ENCODE measurements at regions of chr18 and their contacts with region 1.

Region 1: GRCh38 chr18:63367053-63367953 is at the start of gene KDSR:
- DNase-seq: peak; percentile 85
- H3K4me3 Mint-ChIP-seq: peak within 1 kb of the TSS; percentile 84
- H3K27ac Mint-ChIP-seq: peak within 1 kb of the TSS; percentile 79
- H3K4me1 Mint-ChIP-seq: peaks cover 26% of the 10 kb centered on the region
- H3K27me3 Mint-ChIP-seq: no peaks in the 10 kb centered on the region
- total RNA-seq, gene KDSR: 75.2 to 81.5 TPM

Region 2: GRCh38 chr18:62522504-62523254 is 844.6 kb before region 1 on chr18 and contains the start of gene ZCCHC2:
- CTCF ChIA-PET with region 1: no interaction called
- intact Hi-C with region 1: loop called (anchors 5 kb)
- DNase-seq: peak; percentile 98
- H3K4me3 Mint-ChIP-seq: peak within 1 kb of the TSS; percentile 92
- H3K27ac Mint-ChIP-seq: peak within 1 kb of the TSS; percentile 98
- H3K4me1 Mint-ChIP-seq: peaks cover 14% of the 10 kb centered on the region
- H3K27me3 Mint-ChIP-seq: no peaks in the 10 kb centered on the region
- total RNA-seq, gene ZCCHC2: 22.1 to 23.3 TPM

Region 3: GRCh38 chr18:63237881-63238667 is 129.2 kb before region 1 on chr18:
- CTCF ChIA-PET with region 1: no interaction called
- intact Hi-C with region 1: loop called (anchors 5 kb)
- DNase-seq: no peak
- H3K4me3 Mint-ChIP-seq: no peak overlapping the region
- H3K27ac Mint-ChIP-seq: no peak overlapping the region
- H3K4me1 Mint-ChIP-seq: peaks cover 62% of the 10 kb centered on the region
- H3K27me3 Mint-ChIP-seq: no peaks in the 10 kb centered on the region

Region 4: DNA sequence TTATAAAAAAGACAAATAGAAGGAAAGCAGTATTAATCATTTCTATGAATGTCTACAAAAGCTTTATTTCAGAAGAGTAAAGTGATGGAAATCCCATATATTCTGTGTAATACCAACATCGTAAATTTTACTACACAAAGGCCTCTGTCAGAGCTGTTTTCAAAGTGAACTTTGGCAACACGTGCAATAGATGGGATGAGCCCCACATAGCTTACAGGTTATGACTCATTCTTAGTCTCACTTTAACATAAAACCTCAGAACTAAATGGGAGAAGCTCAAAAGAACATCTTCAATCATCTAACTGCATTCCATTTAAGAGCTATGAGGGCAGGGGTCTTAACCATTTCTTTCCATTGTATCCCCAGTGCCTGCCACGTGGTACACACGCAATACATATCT is 43.5 kb after region 1 on chr18:
- CTCF ChIA-PET with region 1: interaction called, 6 read pairs
- intact Hi-C with region 1: loop called (anchors 1 kb)
- DNase-seq: no peak
- H3K4me3 Mint-ChIP-seq: no peak overlapping the region
- H3K27ac Mint-ChIP-seq: peak overlapping the region; percentile 61
- H3K4me1 Mint-ChIP-seq: peaks cover 45% of the 10 kb centered on the region
- H3K27me3 Mint-ChIP-seq: no peaks in the 10 kb centered on the region

Region 5: DNA sequence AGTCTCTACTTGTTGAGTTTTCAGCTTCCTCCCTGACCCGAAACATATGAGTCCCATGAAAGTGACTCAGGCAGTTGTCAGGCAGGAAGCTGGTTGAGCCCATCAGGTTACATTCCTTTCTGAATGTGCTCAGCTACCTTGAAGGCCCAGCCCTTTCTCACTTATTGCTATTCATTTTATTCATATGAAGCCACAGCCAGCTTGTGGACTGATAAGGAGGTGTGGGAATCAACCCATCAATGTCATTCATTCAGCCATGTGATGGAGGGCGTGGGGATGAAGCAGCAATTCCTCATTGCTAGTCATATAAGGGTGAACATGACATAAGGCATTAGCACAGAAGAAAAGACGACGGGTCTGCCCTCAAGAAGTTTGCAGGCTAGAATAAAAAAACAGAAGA is 60.3 kb after region 1 on chr18:
- CTCF ChIA-PET with region 1: no interaction called
- intact Hi-C with region 1: loop called (anchors 1 kb)
- DNase-seq: peak; percentile 49
- H3K4me3 Mint-ChIP-seq: no peak overlapping the region
- H3K27ac Mint-ChIP-seq: no peak overlapping the region
- H3K4me1 Mint-ChIP-seq: peaks cover 14% of the 10 kb centered on the region
- H3K27me3 Mint-ChIP-seq: peaks cover 8% of the 10 kb centered on the region

Region 6: DNA sequence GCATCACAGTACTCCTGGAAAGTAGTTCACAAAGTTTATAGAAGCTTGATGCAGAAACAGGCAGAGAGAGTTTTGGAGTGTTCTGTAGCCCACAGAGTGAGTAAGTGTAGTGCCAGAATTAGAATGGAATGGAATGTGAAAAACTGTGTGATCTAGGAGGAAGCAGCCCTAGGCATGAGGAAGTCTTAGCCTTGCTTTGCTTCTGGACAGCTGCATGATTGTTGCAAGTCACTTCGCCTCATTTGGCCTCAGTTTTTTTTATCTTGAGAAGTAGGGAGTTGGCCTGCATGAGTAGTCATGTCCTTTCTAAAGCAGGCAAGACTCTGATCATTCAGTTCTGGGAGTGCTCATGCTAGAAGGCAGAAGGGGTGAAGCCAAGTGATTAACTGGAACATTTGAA is 185.8 kb after region 1 on chr18:
- CTCF ChIA-PET with region 1: no interaction called
- intact Hi-C with region 1: no loop called
- DNase-seq: no peak
- H3K4me3 Mint-ChIP-seq: no peak overlapping the region
- H3K27ac Mint-ChIP-seq: no peak overlapping the region
- H3K4me1 Mint-ChIP-seq: no peaks in the 10 kb centered on the region
- H3K27me3 Mint-ChIP-seq: peaks cover 8% of the 10 kb centered on the region

Region 7: DNA sequence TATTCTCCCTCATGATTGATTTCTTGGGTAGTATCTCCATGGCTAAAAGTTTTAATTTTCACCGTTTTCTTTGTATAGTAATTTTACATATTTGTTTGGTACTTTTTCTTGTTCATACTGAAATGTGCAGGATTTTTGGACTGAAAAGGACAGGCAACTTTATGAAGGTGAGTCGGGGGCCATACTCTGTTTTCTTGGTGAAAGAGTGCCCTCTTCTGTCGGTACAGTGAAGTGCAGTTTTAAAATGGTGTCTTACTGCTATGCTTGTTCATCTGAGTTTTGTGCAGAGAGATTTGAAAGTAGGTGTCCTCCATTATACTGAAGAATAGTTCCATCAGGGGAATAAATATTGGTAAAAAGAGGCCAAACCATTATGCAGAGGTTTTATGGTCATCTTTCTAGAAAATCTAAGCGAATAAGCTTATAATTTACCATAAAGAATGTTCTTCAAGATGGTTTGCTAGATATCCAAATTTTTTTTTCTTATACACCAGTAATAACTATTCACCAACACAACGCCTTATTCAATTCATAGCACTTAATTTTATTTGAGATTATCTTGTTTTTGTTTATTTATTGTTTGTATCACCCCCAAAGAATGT is 211.2 kb after region 1 on chr18:
- CTCF ChIA-PET with region 1: no interaction called
- intact Hi-C with region 1: loop called (anchors 10 kb)
- DNase-seq: peak; percentile 28
- H3K4me3 Mint-ChIP-seq: no peak overlapping the region
- H3K27ac Mint-ChIP-seq: no peak overlapping the region
- H3K4me1 Mint-ChIP-seq: no peaks in the 10 kb centered on the region
- H3K27me3 Mint-ChIP-seq: peaks cover 10% of the 10 kb centered on the region

Region 8: GRCh38 chr18:63969960-63970802 is 602.9 kb after region 1 on chr18 and contains the start of gene SERPINB8:
- CTCF ChIA-PET with region 1: no interaction called
- intact Hi-C with region 1: loop called (anchors 1 kb)
- DNase-seq: peak; percentile 91
- H3K4me3 Mint-ChIP-seq: peak within 1 kb of the TSS; percentile 93
- H3K27ac Mint-ChIP-seq: peak within 1 kb of the TSS; percentile 97
- H3K4me1 Mint-ChIP-seq: peaks cover 35% of the 10 kb centered on the region
- H3K27me3 Mint-ChIP-seq: no peaks in the 10 kb centered on the region
- total RNA-seq, gene SERPINB8: 10.5 to 11.7 TPM

Measured in activated naive CD4-positive, alpha-beta T cell treated with anti-CD3 and anti-CD28 coated beads for 36 hours (primary cell).